PC-3 (cell line): ENCODE measurements at regions of chr9 and their contacts with region 1.

Region 1: DNA sequence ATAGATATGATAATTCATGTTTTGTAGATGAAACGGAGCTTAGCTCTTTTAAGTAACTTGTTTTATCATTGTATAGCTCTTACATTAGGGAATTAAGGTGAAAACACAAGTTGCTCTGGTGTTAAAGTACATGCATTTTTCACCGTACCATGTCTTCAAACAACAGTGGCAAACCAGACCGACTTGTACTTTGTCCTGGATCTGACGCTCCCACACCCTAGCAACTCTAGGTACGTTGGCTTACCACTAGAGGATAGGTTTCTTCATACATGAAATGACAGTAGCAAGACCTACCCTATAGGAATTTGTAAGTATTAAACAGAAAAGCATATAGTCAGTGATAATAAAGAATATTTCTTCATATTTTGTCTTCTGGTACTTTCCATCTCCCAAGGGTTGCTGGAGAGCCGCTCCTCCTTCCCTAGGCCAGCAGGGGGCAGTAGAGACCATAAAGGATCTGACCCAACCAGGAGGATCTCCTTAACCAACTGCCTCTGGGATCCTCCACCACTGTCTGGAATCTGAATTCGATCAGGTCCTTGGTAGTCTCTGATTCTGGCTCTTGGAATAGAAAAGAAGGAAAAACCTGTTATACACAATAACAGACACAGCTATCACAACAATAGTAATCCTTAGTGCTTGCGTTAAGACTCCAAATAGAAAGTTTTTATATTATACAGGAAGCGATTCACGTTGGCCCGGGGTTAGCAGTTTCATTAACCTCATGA is 136.7 kb downstream of the CAVIN4 start:
- DNase-seq: peak; percentile 66
- ATAC-seq: peak; percentile 56
- H3K4me3 ChIP-seq: no peak overlapping the region
- H3K27ac ChIP-seq: no peak overlapping the region
- H3K4me1 ChIP-seq: no peaks in the 10 kb centered on the region
- H3K27me3 ChIP-seq: no peaks in the 10 kb centered on the region
- CTCF ChIP-seq: peak; percentile 79

Region 2: GRCh38 chr9:100848726-100849125 is 134.2 kb after region 1 on chr9:
- CTCF ChIA-PET with region 1: no interaction called
- POLR2A ChIA-PET with region 1: no interaction called
- intact Hi-C with region 1: no loop called
- DNase-seq: no peak
- ATAC-seq: no peak
- H3K4me3 ChIP-seq: no peak overlapping the region
- H3K27ac ChIP-seq: no peak overlapping the region
- H3K4me1 ChIP-seq: no peaks in the 10 kb centered on the region
- H3K27me3 ChIP-seq: no peaks in the 10 kb centered on the region
- CTCF ChIP-seq: no peak

Region 3: GRCh38 chr9:101311758-101312420 is 597.4 kb after region 1 on chr9:
- CTCF ChIA-PET with region 1: no interaction called
- POLR2A ChIA-PET with region 1: no interaction called
- intact Hi-C with region 1: loop called (anchors 5 kb)
- DNase-seq: peak; percentile 78
- ATAC-seq: peak; percentile 74
- H3K4me3 ChIP-seq: no peak overlapping the region
- H3K27ac ChIP-seq: no peak overlapping the region
- H3K4me1 ChIP-seq: no peaks in the 10 kb centered on the region
- H3K27me3 ChIP-seq: 0 out of 2 replicates have a peak, but pooled peaks cover 5% of the 10 kb centered on the region
- CTCF ChIP-seq: peak; percentile 69